Naive thymus-derived CD8-positive, alpha-beta T cell (primary cell): ENCODE measurements at regions of chr11 and their contacts with region 1.

Region 1: DNA sequence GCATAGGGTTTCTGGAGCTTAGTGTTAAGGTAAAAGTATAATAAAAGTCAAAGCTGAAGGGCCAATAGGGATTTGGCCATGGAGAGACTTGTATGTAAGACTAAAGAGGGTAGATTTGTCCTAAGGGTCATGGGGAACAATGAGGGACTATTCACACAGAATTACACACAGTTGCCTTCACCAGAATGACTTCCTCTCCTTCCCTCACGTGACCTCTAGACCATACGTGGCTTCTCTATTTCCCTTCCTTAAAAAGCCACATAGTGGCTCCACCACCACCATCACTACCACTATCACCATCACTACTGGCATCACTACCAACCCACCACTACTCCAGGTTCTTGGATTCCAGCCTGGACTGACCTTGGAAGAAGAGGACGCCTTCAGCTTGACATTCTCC is 2.8 kb downstream of the HPX start:
- DNase-seq: no peak
- ATAC-seq: peak; percentile 44 to 81
- H3K4me3 Mint-ChIP-seq: no peak overlapping the region
- H3K27ac Mint-ChIP-seq: no peak overlapping the region
- H3K4me1 Mint-ChIP-seq: peaks cover 2 to 9% (median 6%) of the 10 kb centered on the region in 4 donors
- H3K27me3 Mint-ChIP-seq: no peaks in the 10 kb centered on the region

Region 2: DNA sequence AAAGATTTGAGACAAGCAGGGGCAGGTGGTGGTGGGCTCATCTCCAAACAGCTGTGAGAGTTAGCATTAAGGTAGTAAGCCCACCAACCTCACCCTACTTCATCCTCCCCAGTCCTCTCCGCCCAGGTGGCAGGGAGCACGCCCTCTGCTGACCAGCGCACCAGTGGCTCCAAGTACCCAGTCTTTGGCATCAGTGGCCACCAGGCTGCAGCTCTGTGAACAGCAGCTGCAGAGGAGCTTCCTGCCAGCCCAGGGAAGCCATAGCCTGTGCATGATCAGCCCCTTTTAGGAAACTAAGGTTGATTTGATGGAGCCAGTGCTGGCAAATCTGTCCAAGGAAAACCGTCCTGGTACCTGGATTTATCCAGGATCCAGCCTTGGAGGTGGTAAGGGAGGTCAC is 139.4 kb before region 1 on chr11:
- POLR2A ChIA-PET with region 1: no interaction called
- DNase-seq: no peak
- ATAC-seq: no peak
- H3K4me3 Mint-ChIP-seq: no peak overlapping the region
- H3K27ac Mint-ChIP-seq: no peak overlapping the region
- H3K4me1 Mint-ChIP-seq: no peaks in the 10 kb centered on the region
- H3K27me3 Mint-ChIP-seq: peaks cover 0 to 34% (median 11%) of the 10 kb centered on the region in 5 donors

Region 3: DNA sequence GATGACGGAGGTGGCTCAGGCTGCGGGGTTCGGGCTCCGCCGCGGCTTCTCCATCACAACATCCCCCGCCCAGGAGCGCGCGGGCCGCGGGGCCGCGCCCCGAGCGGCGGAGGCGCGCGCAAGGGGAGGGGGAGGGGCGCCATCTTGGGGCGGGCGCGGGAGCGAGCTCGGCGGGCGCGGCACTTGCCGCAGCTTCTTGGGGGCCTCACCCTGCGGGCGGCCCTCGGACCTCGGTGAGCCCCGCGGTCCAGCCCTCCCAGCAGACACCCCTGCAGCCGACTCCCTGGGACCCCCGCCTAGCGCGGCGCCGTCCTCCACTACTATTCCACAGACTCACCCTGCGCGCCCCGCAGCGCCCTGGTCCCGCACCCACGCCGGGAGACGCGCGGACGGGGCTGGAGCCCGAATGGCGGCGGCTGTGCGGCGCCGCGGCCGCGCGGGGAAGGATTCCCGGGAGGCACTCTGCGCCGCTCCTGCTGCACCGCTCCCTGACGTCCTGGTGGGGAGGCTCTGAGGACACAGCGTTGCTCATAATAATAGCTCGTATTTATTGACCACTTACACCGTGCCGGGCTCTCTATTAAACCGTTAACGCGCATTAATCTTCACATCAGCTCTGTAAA is 18.9 kb before region 1 on chr11 and contains the start of gene APBB1:
- POLR2A ChIA-PET with region 1: interaction called, 11 read pairs
- DNase-seq: peak; percentile 63 to 85 (median 78)
- ATAC-seq: peak; percentile 64 to 73
- H3K4me3 Mint-ChIP-seq: peak within 1 kb of the TSS in 9 of 10 donors; percentile 76 to 89 (median 84)
- H3K27ac Mint-ChIP-seq: peak within 1 kb of the TSS in 9 of 10 donors; percentile 84 to 92 (median 91)
- H3K4me1 Mint-ChIP-seq: peaks cover 8 to 12% (median 10%) of the 10 kb centered on the region in 4 donors
- H3K27me3 Mint-ChIP-seq: peaks cover 0 to 22% (median 2%) of the 10 kb centered on the region in 5 donors
- polyA plus RNA-seq, gene APBB1: 115 to 196 (median 146) TPM